ENCODE measurements at regions of chr5 and their contacts with region 1.

Region 1: GRCh38 chr5:112995764-112996618 is 19.4 kb downstream of the DCP2 start:
- H3K4me3 ChIP-seq: no peak overlapping the region
- H3K27ac ChIP-seq: no peak overlapping the region
- H3K4me1 ChIP-seq: peaks cover 2% of the 10 kb centered on the region; the same call in 1 of the 2 replicates
- CTCF ChIP-seq: peak; percentile 61; the same call in 1 of the 2 replicates

Region 2: DNA sequence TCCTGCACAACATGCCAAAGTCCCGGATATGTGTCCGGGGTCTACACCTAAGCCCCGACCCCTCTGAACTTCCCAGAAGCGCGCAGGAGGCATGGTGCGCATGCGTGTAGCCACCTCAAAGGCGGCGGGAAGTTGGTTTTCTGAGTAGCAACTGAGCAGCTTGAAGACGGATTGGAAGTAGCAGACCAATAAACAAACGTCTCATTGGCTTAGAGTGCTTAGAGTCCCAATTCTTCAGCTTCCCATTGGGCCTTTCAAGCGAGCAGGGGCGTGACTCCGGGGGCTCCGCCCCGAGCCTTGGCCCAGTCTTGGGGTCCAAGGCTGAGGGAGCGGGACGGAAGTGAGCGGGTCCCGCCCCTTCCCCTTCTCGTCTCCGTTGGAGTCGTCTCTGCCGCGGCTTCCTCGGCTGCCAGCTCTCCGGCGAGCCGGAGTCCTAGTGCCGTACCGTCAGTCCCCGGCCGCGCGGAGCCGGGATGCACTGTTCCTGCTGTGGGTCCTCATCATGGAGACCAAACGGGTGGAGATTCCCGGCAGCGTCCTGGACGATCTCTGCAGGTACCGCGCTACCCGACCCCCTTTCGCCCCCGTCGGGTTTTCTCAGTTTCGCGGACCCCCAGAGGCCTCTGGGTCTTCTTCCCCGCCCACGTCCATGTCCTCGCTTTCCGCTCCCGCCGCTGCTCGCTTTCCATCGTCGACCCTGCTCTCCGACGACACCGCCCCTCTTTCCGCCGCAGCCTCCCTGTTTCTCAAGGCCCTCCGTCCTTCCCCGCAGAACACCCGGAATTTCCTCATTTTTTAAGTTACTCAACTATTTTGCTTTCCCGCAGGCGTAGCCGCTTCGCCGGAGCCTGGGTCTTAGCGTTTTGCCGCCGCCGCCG is 19.3 kb before region 1 on chr5 and contains the start of gene DCP2:
- CTCF ChIA-PET with region 1: interaction called, 21 read pairs
- POLR2A ChIA-PET with region 1: interaction called, 7 read pairs
- H3K4me3 ChIP-seq: peak within 1 kb of the TSS; percentile 96
- H3K27ac ChIP-seq: peak within 1 kb of the TSS; percentile 89
- H3K4me1 ChIP-seq: peaks cover 16% of the 10 kb centered on the region
- CTCF ChIP-seq: peak; percentile 59; the same call in 1 of the 2 replicates

Region 3: DNA sequence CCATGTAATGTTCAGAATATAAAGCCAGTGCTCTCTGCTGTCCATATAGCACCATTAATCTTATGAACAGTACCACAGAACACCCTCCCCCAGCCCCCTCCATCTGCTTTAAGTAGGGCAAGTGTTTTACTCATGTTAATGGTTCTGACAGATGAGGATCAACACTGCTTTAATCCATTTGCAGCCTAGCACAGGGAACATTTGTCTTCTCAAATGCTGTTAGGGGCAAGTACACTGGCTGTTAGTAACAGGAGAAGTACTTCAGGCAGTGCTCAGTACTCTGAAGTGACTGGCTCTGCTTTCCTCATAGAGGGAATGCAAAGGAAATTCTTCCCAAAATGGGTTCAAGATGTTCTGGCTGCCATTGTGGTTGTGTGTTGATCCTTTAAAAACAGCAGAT is 183.2 kb after region 1 on chr5:
- CTCF ChIA-PET with region 1: interaction called, 10 read pairs
- POLR2A ChIA-PET with region 1: no interaction called
- H3K4me3 ChIP-seq: no peak overlapping the region
- H3K27ac ChIP-seq: no peak overlapping the region
- H3K4me1 ChIP-seq: peaks cover 31% of the 10 kb centered on the region
- CTCF ChIP-seq: no peak

Region 4: GRCh38 chr5:113378959-113379541 is 383.1 kb after region 1 on chr5:
- CTCF ChIA-PET with region 1: interaction called, 13 read pairs
- POLR2A ChIA-PET with region 1: no interaction called
- H3K4me3 ChIP-seq: no peak overlapping the region
- H3K27ac ChIP-seq: no peak overlapping the region
- H3K4me1 ChIP-seq: no peaks in the 10 kb centered on the region
- CTCF ChIP-seq: 0 out of 2 replicates have a peak, but pooled peaks have one; percentile 28

Region 5: GRCh38 chr5:113572716-113573115 is 576.7 kb after region 1 on chr5:
- CTCF ChIA-PET with region 1: interaction called, 10 read pairs
- POLR2A ChIA-PET with region 1: no interaction called
- H3K4me3 ChIP-seq: no peak overlapping the region
- H3K27ac ChIP-seq: no peak overlapping the region
- H3K4me1 ChIP-seq: no peaks in the 10 kb centered on the region
- CTCF ChIP-seq: no peak